ENCODE measurements at regions of chr5 and their contacts with region 1.

Region 1: GRCh38 chr5:135236908-135237747 is 161.9 kb downstream of the MACROH2A1 start:
- DNase-seq: no peak
- ATAC-seq: no peak; a peak in 1 of 6 replicates
- H3K4me3 ChIP-seq: no peak overlapping the region
- H3K27ac ChIP-seq: peak overlapping the region in 1 of 2 experiments; percentile 25; a peak in 2 of 6 replicates
- H3K4me1 ChIP-seq: peaks cover 8% of the 10 kb centered on the region
- CTCF ChIP-seq: no peak
- EP300 ChIP-seq: no peak
- POLR2A ChIP-seq: no peak
- RAD21 ChIP-seq: no peak

Region 2: GRCh38 chr5:135246923-135247795 is 10.0 kb after region 1 on chr5:
- CTCF ChIA-PET with region 1: interaction called, 14 read pairs
- POLR2A ChIA-PET with region 1: interaction called, 4 read pairs
- DNase-seq: peak; percentile 85 to 86
- ATAC-seq: peak; percentile 80 to 86
- H3K4me3 ChIP-seq: 0 out of 3 replicates have a peak overlapping the region, but pooled peaks have one; percentile 17
- H3K27ac ChIP-seq: peak overlapping the region; percentile 93 to 98
- H3K4me1 ChIP-seq: peaks cover 63% of the 10 kb centered on the region
- CTCF ChIP-seq: no peak
- EP300 ChIP-seq: peak in 1 of 2 experiments; percentile 58; a peak in 2 of 5 replicates
- POLR2A ChIP-seq: no peak
- RAD21 ChIP-seq: no peak; a peak in 1 of 5 replicates

Measured in A549 (cell line).